Panc1 (cell line): ENCODE measurements at regions of chr11 and their contacts with region 1.

Region 1: GRCh38 chr11:87281496-87281895 is 243.8 kb downstream of the TMEM135 start:
- DNase-seq: no peak
- ATAC-seq: peak; percentile 68; the same call in 1 of the 2 replicates
- H3K4me3 ChIP-seq: no peak overlapping the region
- H3K27ac ChIP-seq: no peak overlapping the region
- H3K4me1 ChIP-seq: no peaks in the 10 kb centered on the region
- H3K27me3 ChIP-seq: no peaks in the 10 kb centered on the region
- CTCF ChIP-seq: peak; percentile 18; the same call in 1 of the 2 replicates

Region 2: GRCh38 chr11:87097582-87097981 is 183.9 kb before region 1 on chr11:
- CTCF ChIA-PET with region 1: no interaction called
- POLR2A ChIA-PET with region 1: no interaction called
- in situ Hi-C with region 1: no loop called
- intact Hi-C with region 1: loop called (anchors 10 kb)
- DNase-seq: peak; percentile 41
- ATAC-seq: peak; percentile 93
- H3K4me3 ChIP-seq: no peak overlapping the region
- H3K27ac ChIP-seq: no peak overlapping the region
- H3K4me1 ChIP-seq: no peaks in the 10 kb centered on the region
- H3K27me3 ChIP-seq: no peaks in the 10 kb centered on the region
- CTCF ChIP-seq: peak; percentile 92

Region 3: GRCh38 chr11:87203907-87204602 is 77.4 kb before region 1 on chr11:
- CTCF ChIA-PET with region 1: no interaction called
- POLR2A ChIA-PET with region 1: no interaction called
- in situ Hi-C with region 1: no loop called
- intact Hi-C with region 1: no loop called
- DNase-seq: no peak
- ATAC-seq: no peak
- H3K4me3 ChIP-seq: no peak overlapping the region
- H3K27ac ChIP-seq: no peak overlapping the region
- H3K4me1 ChIP-seq: no peaks in the 10 kb centered on the region
- H3K27me3 ChIP-seq: no peaks in the 10 kb centered on the region
- CTCF ChIP-seq: no peak